ENCODE measurements at regions of chr1 and their contacts with region 1.

Region 1: DNA sequence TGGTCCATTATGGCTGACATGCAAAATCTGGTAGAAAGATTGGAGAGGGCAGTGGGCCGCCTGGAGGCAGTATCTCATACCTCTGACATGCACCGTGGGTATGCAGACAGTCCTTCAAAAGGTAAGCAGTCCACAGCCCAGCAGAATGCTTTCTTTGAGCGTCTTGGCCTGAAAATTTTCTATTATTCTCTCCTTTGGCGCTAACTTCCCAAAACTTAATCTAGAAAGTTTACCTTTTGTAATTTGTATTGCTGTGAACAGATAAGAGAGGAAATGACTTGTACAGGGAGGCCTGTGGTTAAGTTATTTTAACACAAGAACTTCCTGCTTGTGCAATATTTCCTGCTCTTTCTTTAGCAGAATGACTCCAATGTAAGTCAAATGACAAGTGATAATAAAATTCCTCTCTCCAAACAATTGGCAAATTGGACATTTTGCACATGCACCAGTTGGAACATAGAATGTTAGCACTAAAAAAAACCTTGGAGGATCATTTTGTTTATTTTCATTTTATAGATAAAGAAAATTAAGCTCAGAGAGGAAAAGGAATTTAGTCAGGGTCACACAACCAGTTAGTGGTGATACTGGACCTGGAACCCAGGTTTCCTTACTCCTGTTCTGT is 18.9 kb downstream of the CAP1 start:
- DNase-seq: peak in 3 of 5 donors; percentile 12 to 56 (median 48)
- H3K4me3 ChIP-seq: peak overlapping the region; percentile 16
- H3K4me3 Mint-ChIP-seq: peak overlapping the region; percentile 56 to 86 (median 67)
- H3K27ac ChIP-seq: peak overlapping the region; percentile 58
- H3K27ac Mint-ChIP-seq: peak overlapping the region; percentile 77 to 94 (median 86)
- H3K4me1 ChIP-seq: peaks cover 91% of the 10 kb centered on the region
- H3K4me1 Mint-ChIP-seq: peaks cover 91 to 95% (median 94%) of the 10 kb centered on the region in 3 donors
- H3K27me3 ChIP-seq: no peaks in the 10 kb centered on the region
- H3K27me3 Mint-ChIP-seq: no peaks in the 10 kb centered on the region

Region 2: GRCh38 chr1:40040511-40041465 is 18.7 kb before region 1 on chr1 and contains the start of gene CAP1:
- CTCF ChIA-PET with region 1: interaction called, 4 read pairs
- POLR2A ChIA-PET with region 1: interaction called, 10 read pairs
- DNase-seq: peak; percentile 100
- H3K4me3 ChIP-seq: peak within 1 kb of the TSS; percentile 91
- H3K4me3 Mint-ChIP-seq: peak within 1 kb of the TSS; percentile 90 to 98 (median 96)
- H3K27ac ChIP-seq: peak within 1 kb of the TSS; percentile 91
- H3K27ac Mint-ChIP-seq: peak within 1 kb of the TSS; percentile 90 to 100 (median 98)
- H3K4me1 ChIP-seq: peaks cover 69% of the 10 kb centered on the region
- H3K4me1 Mint-ChIP-seq: peaks cover 60 to 81% (median 78%) of the 10 kb centered on the region in 3 donors
- H3K27me3 ChIP-seq: no peaks in the 10 kb centered on the region
- H3K27me3 Mint-ChIP-seq: no peaks in the 10 kb centered on the region
- total RNA-seq, gene CAP1: 519 to 536 TPM

Measured in CD8-positive, alpha-beta memory T cell (primary cell).